Caco-2 (cell line): ENCODE measurements at regions of chr17 and their contacts with region 1.

Region 1: DNA sequence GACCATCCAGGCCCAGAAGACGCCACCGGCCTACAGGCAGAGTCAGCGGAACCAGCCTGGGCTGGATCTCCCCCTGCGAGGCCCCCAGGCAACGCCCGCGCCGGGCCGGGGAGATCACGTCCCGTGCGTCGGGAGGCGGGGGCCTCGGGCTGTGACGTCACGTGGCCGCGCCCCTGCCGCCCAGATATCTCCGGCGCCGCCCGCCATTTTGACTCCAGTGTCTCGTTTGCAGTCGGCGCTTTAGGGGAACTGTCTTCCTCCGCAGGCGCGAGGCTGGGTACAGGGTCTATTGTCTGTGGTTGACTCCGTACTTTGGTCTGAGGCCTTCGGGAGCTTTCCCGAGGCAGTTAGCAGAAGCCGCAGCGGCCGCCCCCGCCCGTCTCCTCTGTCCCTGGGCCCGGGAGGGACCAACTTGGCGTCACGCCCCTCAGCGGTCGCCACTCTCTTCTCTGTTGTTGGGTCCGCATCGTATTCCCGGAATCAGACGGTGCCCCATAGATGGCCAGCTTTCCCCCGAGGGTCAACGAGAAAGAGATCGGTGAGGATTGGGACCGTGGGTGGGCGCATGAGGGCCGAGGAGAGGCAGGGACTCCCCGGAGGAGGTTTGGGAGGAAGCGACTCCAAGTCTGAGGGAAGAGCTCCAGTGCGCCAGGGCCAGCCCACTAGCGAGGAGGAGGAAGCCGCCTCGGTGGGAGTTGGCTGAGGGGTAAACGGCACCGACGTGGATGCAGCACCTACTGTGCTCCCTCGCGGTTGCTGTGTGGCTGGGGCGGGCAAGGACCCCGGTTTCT is at the start of gene WSB1:
- DNase-seq: peak; percentile 92 to 96
- H3K4me3 ChIP-seq: peak within 1 kb of the TSS; percentile 100
- H3K4me3 Mint-ChIP-seq: peak within 1 kb of the TSS; percentile 98
- H3K27ac Mint-ChIP-seq: peak within 1 kb of the TSS; percentile 97
- H3K4me1 ChIP-seq: peaks cover 13% of the 10 kb centered on the region
- H3K4me1 Mint-ChIP-seq: peaks cover 27% of the 10 kb centered on the region
- H3K27me3 ChIP-seq: no peaks in the 10 kb centered on the region
- H3K27me3 Mint-ChIP-seq: no peaks in the 10 kb centered on the region
- CTCF ChIP-seq: peak in 1 of 2 experiments; percentile 2
- total RNA-seq, gene WSB1: 149 and 157 TPM in 2 replicates

Region 2: GRCh38 chr17:27245230-27245696 is 48.8 kb before region 1 on chr17:
- CTCF ChIA-PET with region 1: interaction called, 14 read pairs
- POLR2A ChIA-PET with region 1: interaction called, 13 read pairs
- intact Hi-C with region 1: loop called (anchors 1 kb)
- DNase-seq: peak; percentile 90
- H3K4me3 ChIP-seq: no peak overlapping the region
- H3K4me3 Mint-ChIP-seq: peak overlapping the region; percentile 46
- H3K27ac Mint-ChIP-seq: peak overlapping the region; percentile 5
- H3K4me1 ChIP-seq: peaks cover 42% of the 10 kb centered on the region
- H3K4me1 Mint-ChIP-seq: peaks cover 37% of the 10 kb centered on the region
- H3K27me3 ChIP-seq: no peaks in the 10 kb centered on the region
- H3K27me3 Mint-ChIP-seq: no peaks in the 10 kb centered on the region
- CTCF ChIP-seq: peak; percentile 75 to 89

Region 3: GRCh38 chr17:27265333-27265732 is 28.8 kb before region 1 on chr17:
- CTCF ChIA-PET with region 1: interaction called, 4 read pairs
- POLR2A ChIA-PET with region 1: interaction called, 23 read pairs
- intact Hi-C with region 1: loop called (anchors 1 kb)
- DNase-seq: peak; percentile 71 to 74
- H3K4me3 ChIP-seq: no peak overlapping the region
- H3K4me3 Mint-ChIP-seq: no peak overlapping the region
- H3K27ac Mint-ChIP-seq: peak overlapping the region; percentile 20
- H3K4me1 ChIP-seq: peaks cover 31% of the 10 kb centered on the region
- H3K4me1 Mint-ChIP-seq: peaks cover 29% of the 10 kb centered on the region
- H3K27me3 ChIP-seq: no peaks in the 10 kb centered on the region
- H3K27me3 Mint-ChIP-seq: no peaks in the 10 kb centered on the region
- CTCF ChIP-seq: no peak

Region 4: GRCh38 chr17:27315322-27315721 is 21.2 kb after region 1 on chr17:
- CTCF ChIA-PET with region 1: no interaction called
- POLR2A ChIA-PET with region 1: interaction called, 5 read pairs
- intact Hi-C with region 1: loop called (anchors 2 kb)
- DNase-seq: no peak
- H3K4me3 ChIP-seq: no peak overlapping the region
- H3K4me3 Mint-ChIP-seq: no peak overlapping the region
- H3K27ac Mint-ChIP-seq: no peak overlapping the region
- H3K4me1 ChIP-seq: peaks cover 14% of the 10 kb centered on the region
- H3K4me1 Mint-ChIP-seq: peaks cover 15% of the 10 kb centered on the region
- H3K27me3 ChIP-seq: no peaks in the 10 kb centered on the region
- H3K27me3 Mint-ChIP-seq: no peaks in the 10 kb centered on the region
- CTCF ChIP-seq: no peak

Region 5: GRCh38 chr17:27559506-27560481 is 265.7 kb after region 1 on chr17:
- CTCF ChIA-PET with region 1: no interaction called
- POLR2A ChIA-PET with region 1: no interaction called
- intact Hi-C with region 1: no loop called
- DNase-seq: no peak
- H3K4me3 ChIP-seq: no peak overlapping the region
- H3K4me3 Mint-ChIP-seq: no peak overlapping the region
- H3K27ac Mint-ChIP-seq: peak overlapping the region; percentile 5
- H3K4me1 ChIP-seq: peaks cover 12% of the 10 kb centered on the region
- H3K4me1 Mint-ChIP-seq: peaks cover 22% of the 10 kb centered on the region
- H3K27me3 ChIP-seq: no peaks in the 10 kb centered on the region
- H3K27me3 Mint-ChIP-seq: no peaks in the 10 kb centered on the region
- CTCF ChIP-seq: no peak